Heart right ventricle (tissue), 16 donors: ENCODE measurements at regions of chr2 and their contacts with region 1.

Region 1: DNA sequence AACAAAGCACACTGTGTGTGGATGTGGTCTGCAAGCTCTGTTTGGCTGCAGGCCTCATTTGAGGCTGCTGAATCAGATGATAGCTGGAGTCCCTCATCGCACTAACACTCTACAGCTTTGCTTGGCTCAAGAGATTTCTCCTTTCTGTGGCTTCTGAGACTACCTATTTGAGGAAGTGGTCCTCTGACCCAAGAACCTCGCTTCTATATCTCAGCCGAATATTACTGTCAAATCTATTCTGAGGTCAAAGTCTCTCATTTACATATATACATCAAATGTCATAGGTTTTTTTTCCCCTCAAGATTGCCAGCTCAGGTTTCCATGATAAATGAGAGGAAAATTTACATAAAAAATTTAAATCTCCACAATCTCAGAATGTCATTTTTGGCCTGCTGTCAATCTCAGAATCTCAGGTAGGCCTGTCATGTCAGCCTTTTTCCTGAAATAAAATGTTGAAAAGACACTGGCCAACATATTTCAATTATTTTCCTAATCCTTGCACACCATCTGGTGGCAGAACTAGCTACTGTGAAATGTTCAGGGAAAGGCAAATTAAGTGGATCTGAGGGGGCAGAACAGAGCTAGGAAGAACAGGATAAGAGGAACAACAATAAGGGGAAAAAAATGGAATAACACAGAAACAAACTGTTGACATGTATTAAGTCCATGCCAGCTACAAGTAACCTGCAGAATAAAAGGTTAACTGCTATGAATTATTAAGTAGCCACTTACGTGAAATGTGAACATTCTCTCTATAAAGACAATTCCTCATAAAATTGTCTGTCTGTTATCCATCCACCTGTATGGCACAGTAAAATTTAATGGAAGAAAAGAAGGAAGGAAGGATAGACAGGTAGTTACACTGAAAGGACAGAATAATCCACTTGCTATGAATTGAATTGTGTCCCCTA is 39.3 kb downstream of the AP1S3 start:
- DNase-seq: no peak
- ATAC-seq: peak in 5 of 8 donors; percentile 38 to 65 (median 56)
- H3K4me3 ChIP-seq: no peak overlapping the region
- H3K27ac ChIP-seq: no peak overlapping the region
- H3K4me1 ChIP-seq: no peaks in the 10 kb centered on the region
- H3K27me3 ChIP-seq: no peaks in the 10 kb centered on the region
- CTCF ChIP-seq: peak; percentile 41 to 75 (median 62)

Region 2: GRCh38 chr2:222969491-222969890 is 828.6 kb before region 1 on chr2:
- intact Hi-C with region 1: loop called in 9 of 10 experiments (anchors 1 to 5 kb)
- DNase-seq: no peak
- ATAC-seq: no peak
- H3K4me3 ChIP-seq: no peak overlapping the region
- H3K27ac ChIP-seq: no peak overlapping the region
- H3K4me1 ChIP-seq: peaks cover 0 to 5% (median 0%) of the 10 kb centered on the region in 9 donors
- H3K27me3 ChIP-seq: peaks cover 0 to 3% (median 0%) of the 10 kb centered on the region in 7 donors
- CTCF ChIP-seq: no peak

Region 3: GRCh38 chr2:222976521-222977076 is 821.5 kb before region 1 on chr2:
- intact Hi-C with region 1: loop called in 9 of 10 experiments (anchors 1 to 5 kb)
- DNase-seq: no peak
- ATAC-seq: no peak
- H3K4me3 ChIP-seq: no peak overlapping the region
- H3K27ac ChIP-seq: no peak overlapping the region
- H3K4me1 ChIP-seq: peaks cover 0 to 5% (median 0%) of the 10 kb centered on the region in 9 donors
- H3K27me3 ChIP-seq: peaks cover 0 to 5% (median 0%) of the 10 kb centered on the region in 7 donors
- CTCF ChIP-seq: no peak

Region 4: DNA sequence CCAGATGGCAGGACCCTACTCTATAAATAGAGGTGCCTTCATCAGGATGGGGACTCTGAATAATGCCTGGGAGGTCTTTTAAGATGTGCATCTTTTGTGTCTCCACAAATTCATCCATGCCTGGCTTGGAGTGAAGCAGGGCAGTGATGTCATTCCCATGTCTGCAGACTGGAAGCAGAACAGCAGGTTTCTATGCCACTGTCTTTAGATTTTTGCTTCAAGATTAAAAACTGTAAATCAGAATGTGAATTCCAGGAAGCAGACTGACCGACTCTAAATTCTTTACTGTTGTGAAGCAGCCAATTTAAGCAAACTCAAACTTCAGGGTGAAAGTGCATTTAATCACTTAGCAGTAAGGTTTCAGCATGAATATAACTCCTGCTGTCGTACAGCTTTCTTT is 355.2 kb before region 1 on chr2:
- intact Hi-C with region 1: loop called in 1 of 10 experiments (anchors 10 kb)
- DNase-seq: no peak
- ATAC-seq: no peak
- H3K4me3 ChIP-seq: no peak overlapping the region
- H3K27ac ChIP-seq: no peak overlapping the region
- H3K4me1 ChIP-seq: no peaks in the 10 kb centered on the region
- H3K27me3 ChIP-seq: no peaks in the 10 kb centered on the region
- CTCF ChIP-seq: no peak

Region 5: DNA sequence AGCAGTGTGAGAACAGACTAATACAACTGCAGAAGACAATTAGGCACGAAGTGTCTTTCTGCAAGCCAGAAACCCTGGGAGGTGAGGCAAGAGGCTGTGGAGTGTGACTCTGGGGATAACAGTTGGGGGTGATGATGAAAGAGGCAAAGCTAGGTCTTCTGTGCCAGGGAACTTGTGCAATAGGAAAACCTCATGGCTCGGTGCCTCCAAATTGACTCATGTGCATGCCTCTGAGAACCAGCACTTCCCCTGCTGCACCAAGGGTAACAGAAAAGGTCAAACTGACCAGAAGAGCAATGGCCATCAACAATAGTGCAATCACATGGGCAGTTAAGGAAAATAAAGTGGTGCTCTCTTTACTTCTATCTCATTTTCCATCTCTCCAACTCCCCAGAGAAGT is 332.3 kb before region 1 on chr2:
- intact Hi-C with region 1: loop called in 1 of 10 experiments (anchors 10 kb)
- DNase-seq: peak; percentile 49 to 65
- ATAC-seq: peak; percentile 48 to 95 (median 83)
- H3K4me3 ChIP-seq: no peak overlapping the region
- H3K27ac ChIP-seq: peak overlapping the region in 1 of 10 donors; percentile 41
- H3K4me1 ChIP-seq: peaks cover 0 to 49% (median 4%) of the 10 kb centered on the region in 9 donors
- H3K27me3 ChIP-seq: no peaks in the 10 kb centered on the region
- CTCF ChIP-seq: no peak

Region 6: GRCh38 chr2:223674998-223675609 is 123.0 kb before region 1 on chr2:
- intact Hi-C with region 1: loop called in 1 of 10 experiments (anchors 10 kb)
- DNase-seq: no peak
- ATAC-seq: no peak
- H3K4me3 ChIP-seq: no peak overlapping the region
- H3K27ac ChIP-seq: no peak overlapping the region
- H3K4me1 ChIP-seq: no peaks in the 10 kb centered on the region
- H3K27me3 ChIP-seq: no peaks in the 10 kb centered on the region
- CTCF ChIP-seq: peak in 7 of 9 donors; percentile 32 to 60 (median 49)

Region 7: DNA sequence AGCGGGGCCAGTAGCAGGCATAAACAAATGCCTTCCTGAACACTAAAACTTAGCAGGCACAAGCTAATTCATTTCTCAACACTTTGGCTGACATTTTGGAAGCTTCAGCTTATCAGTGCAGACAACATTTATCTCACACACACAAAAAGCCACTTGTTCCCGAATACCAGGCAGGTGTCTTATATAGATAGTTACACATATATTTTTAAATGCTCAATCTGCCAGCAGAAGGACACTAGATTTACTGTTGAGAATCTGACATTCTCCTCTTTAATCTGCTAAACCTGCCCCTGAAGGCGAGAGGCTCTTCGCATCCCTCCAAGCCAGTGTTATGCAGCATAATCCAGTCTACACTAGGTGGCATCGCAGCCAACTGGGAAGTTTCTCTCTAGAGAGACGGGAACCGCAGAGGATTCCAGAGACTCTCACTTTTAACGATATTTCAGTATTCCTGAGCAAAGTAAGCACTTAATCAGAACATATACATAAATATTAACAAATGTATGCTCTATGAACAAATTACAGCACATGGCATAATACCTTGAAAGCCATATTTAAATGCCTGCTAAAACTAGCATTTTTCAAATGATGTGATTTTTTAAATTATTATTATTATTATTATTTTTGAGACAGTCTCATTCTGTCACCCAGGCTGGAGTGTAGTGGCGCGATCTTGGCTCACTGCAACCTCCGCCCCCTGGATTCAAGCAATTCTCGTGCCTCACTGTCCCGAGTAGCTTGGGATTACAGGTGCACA is 105.7 kb before region 1 on chr2:
- intact Hi-C with region 1: loop called in 9 of 10 experiments (anchors 2 to 10 kb)
- DNase-seq: peak in 1 of 2 donors; percentile 10
- ATAC-seq: peak in 5 of 8 donors; percentile 62 to 71 (median 63)
- H3K4me3 ChIP-seq: no peak overlapping the region
- H3K27ac ChIP-seq: no peak overlapping the region
- H3K4me1 ChIP-seq: peaks cover 0 to 5% (median 0%) of the 10 kb centered on the region in 9 donors
- H3K27me3 ChIP-seq: peaks cover 0 to 13% (median 0%) of the 10 kb centered on the region in 7 donors
- CTCF ChIP-seq: peak in 8 of 9 donors; percentile 39 to 75 (median 66)

Region 8: GRCh38 chr2:223944703-223945531 is 146.9 kb after region 1 on chr2 and contains the start of gene WDFY1:
- intact Hi-C with region 1: no loop called
- DNase-seq: peak; percentile 87 to 91
- ATAC-seq: peak; percentile 96 to 98 (median 96)
- H3K4me3 ChIP-seq: peak within 1 kb of the TSS; percentile 76 to 100 (median 97)
- H3K27ac ChIP-seq: peak within 1 kb of the TSS; percentile 92 to 99 (median 96)
- H3K4me1 ChIP-seq: peaks cover 8 to 45% (median 36%) of the 10 kb centered on the region in 9 donors
- H3K27me3 ChIP-seq: no peaks in the 10 kb centered on the region
- CTCF ChIP-seq: peak in 1 of 9 donors; percentile 4
- total RNA-seq, gene WDFY1: 10.9 to 25.9 (median 14.7) TPM